ENCODE measurements at regions of chr7 and their contacts with region 1.

Region 1: GRCh38 chr7:39894904-39895303 is 55.2 kb upstream of the CDK13 start:
- DNase-seq: no peak
- ATAC-seq: no peak
- H3K4me3 ChIP-seq: no peak overlapping the region
- H3K27ac ChIP-seq: no peak overlapping the region
- H3K4me1 ChIP-seq: peaks cover 0 to 12% (median 0%) of the 10 kb centered on the region in 12 donors
- H3K27me3 ChIP-seq: peaks cover 0 to 2% (median 0%) of the 10 kb centered on the region in 9 donors
- CTCF ChIP-seq: no peak
- POLR2A ChIP-seq: no peak

Region 2: GRCh38 chr7:40047661-40048060 is 152.8 kb after region 1 on chr7:
- intact Hi-C with region 1: loop called (anchors 1 to 5 kb)
- DNase-seq: no peak
- ATAC-seq: no peak
- H3K4me3 ChIP-seq: no peak overlapping the region
- H3K27ac ChIP-seq: no peak overlapping the region
- H3K4me1 ChIP-seq: peaks cover 0 to 7% (median 0%) of the 10 kb centered on the region in 12 donors
- H3K27me3 ChIP-seq: no peaks in the 10 kb centered on the region
- CTCF ChIP-seq: peak in 2 of 12 donors; percentile 8 to 11
- POLR2A ChIP-seq: no peak

Region 3: GRCh38 chr7:40057292-40057691 is 162.4 kb after region 1 on chr7:
- intact Hi-C with region 1: loop called in 8 of 10 experiments (anchors 1 to 5 kb)
- DNase-seq: peak in 4 of 5 donors; percentile 32 to 63 (median 42)
- ATAC-seq: peak; percentile 27 to 90 (median 76)
- H3K4me3 ChIP-seq: no peak overlapping the region
- H3K27ac ChIP-seq: no peak overlapping the region
- H3K4me1 ChIP-seq: peaks cover 0 to 28% (median 4%) of the 10 kb centered on the region in 12 donors
- H3K27me3 ChIP-seq: no peaks in the 10 kb centered on the region
- CTCF ChIP-seq: no peak
- POLR2A ChIP-seq: no peak

Region 4: DNA sequence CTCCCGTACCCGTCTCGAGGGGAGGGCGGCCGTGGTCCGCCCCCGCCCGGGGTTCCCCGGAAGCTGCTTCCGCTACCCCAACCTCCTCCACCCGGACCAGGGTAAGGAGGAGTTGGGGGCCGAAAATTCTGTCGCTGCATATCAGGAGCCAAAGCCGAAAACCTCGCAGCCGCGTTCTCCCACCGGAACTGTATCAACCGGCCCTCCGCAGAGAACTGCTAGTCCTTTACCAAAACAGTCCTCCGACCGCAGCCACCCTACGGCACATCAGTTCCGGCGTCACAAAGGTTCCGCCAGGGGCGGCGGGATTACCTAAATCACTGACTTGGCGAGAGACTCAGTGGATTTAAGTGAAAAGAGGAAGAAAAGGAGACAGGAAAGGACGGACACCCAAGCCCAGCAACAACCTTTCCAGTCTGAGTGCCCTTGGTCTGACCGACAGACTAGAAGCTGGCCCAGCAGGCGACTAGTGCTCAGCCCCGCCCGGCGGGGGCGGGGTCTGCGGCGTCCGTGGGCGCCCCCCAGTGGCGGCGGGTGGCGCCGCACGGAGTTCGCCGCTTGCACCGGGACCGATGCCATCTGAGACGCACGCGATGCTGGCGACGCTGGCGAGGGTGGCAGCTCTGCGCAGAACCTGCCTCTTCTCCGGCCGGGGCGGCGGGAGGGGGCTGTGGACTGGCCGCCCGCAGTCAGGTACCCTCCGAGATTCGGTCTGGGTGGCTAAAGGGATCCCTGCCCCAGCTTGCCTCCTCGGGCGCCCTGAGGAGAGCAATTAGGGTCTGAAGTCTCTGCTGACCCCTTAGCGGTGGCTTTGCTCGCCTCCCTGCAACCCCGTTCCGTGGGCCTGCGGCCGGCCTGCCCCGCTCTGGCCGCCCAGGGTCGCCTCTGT is 239.8 kb after region 1 on chr7 and contains the starts of genes MPLKIP and SUGCT:
- intact Hi-C with region 1: loop called in 5 of 10 experiments (anchors 5 to 10 kb)
- DNase-seq: peak; percentile 83 to 91 (median 87)
- ATAC-seq: peak; percentile 92 to 97 (median 96)
- H3K4me3 ChIP-seq: peak within 1 kb of the TSS; percentile 69 to 100 (median 94)
- H3K27ac ChIP-seq: peak within 1 kb of the TSS; percentile 82 to 98 (median 94)
- H3K4me1 ChIP-seq: peaks cover 5 to 35% (median 24%) of the 10 kb centered on the region in 12 donors
- H3K27me3 ChIP-seq: no peaks in the 10 kb centered on the region
- CTCF ChIP-seq: peak; percentile 94 to 100 (median 99)
- POLR2A ChIP-seq: peak in 1 of 2 donors; percentile 27
- total RNA-seq, gene MPLKIP: 12.0 to 19.3 (median 15.6) TPM
- total RNA-seq, gene SUGCT: 2.9 to 7.6 (median 5.2) TPM